CD4-positive, alpha-beta memory T cell (primary cell): ENCODE measurements at regions of chr5 and their contacts with region 1.

Region 1: GRCh38 chr5:141691867-141692532 is 10.0 kb upstream of the ARAP3 start:
- DNase-seq: peak; percentile 76 to 83 (median 76)
- H3K4me3 ChIP-seq: peak overlapping the region; percentile 31 to 76
- H3K4me3 Mint-ChIP-seq: peak overlapping the region; percentile 72 to 89 (median 82)
- H3K27ac ChIP-seq: no peak overlapping the region
- H3K27ac Mint-ChIP-seq: peak overlapping the region in 6 of 7 donors; percentile 36 to 85 (median 66)
- H3K4me1 ChIP-seq: peaks cover 22% of the 10 kb centered on the region
- H3K4me1 Mint-ChIP-seq: peaks cover 20 to 31% (median 24%) of the 10 kb centered on the region in 4 donors
- H3K27me3 ChIP-seq: no peaks in the 10 kb centered on the region
- H3K27me3 Mint-ChIP-seq: peaks cover 4% of the 10 kb centered on the region in 2 donors

Region 2: DNA sequence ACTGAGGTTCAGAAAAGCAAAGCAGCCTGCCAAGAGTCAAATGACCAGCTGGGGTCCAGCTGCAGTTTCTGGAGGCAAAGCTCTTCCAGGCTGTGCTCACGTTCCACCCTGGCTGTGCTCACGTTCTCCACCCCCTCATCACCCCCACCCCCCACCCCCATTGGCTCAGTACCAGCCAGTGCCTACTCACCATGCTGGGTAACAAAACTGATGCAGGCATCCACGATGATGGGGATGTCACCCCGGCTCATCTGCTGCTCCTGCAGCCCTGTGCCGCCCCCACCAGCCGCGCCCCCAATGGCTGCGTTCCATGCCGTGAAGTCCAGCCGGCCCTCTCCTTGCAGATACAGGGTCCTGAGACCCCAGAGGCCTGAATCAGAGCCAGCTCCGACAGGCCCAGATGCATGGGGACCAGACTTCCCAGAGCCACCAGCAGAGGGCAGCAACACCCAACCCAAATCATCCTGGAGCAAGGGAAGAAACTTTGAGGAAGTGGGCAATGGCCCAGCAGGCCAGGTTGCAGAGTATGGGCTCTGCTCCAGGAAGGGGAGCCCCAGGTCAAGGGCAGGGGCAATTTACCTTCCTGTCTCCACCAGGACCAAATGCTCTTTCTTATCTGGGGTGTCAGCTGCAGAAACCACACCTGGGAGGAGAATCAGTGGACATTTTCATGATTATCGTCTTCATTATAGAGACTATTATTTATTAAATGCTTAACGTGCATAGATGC is 27.1 kb before region 1 on chr5:
- CTCF ChIA-PET with region 1: interaction called, 53 read pairs
- POLR2A ChIA-PET with region 1: interaction called, 7 read pairs
- intact Hi-C with region 1: no loop called
- DNase-seq: peak; percentile 58 to 69 (median 59)
- H3K4me3 ChIP-seq: no peak overlapping the region
- H3K4me3 Mint-ChIP-seq: no peak overlapping the region
- H3K27ac ChIP-seq: no peak overlapping the region
- H3K27ac Mint-ChIP-seq: no peak overlapping the region
- H3K4me1 ChIP-seq: no peaks in the 10 kb centered on the region
- H3K4me1 Mint-ChIP-seq: peaks cover 2 to 5% (median 4%) of the 10 kb centered on the region in 4 donors
- H3K27me3 ChIP-seq: no peaks in the 10 kb centered on the region
- H3K27me3 Mint-ChIP-seq: no peaks in the 10 kb centered on the region

Region 3: GRCh38 chr5:141724825-141725573 is 33.0 kb after region 1 on chr5:
- CTCF ChIA-PET with region 1: no interaction called
- POLR2A ChIA-PET with region 1: no interaction called
- intact Hi-C with region 1: no loop called
- DNase-seq: no peak
- H3K4me3 ChIP-seq: no peak overlapping the region
- H3K4me3 Mint-ChIP-seq: no peak overlapping the region
- H3K27ac ChIP-seq: no peak overlapping the region
- H3K27ac Mint-ChIP-seq: no peak overlapping the region
- H3K4me1 ChIP-seq: no peaks in the 10 kb centered on the region
- H3K4me1 Mint-ChIP-seq: no peaks in the 10 kb centered on the region
- H3K27me3 ChIP-seq: no peaks in the 10 kb centered on the region
- H3K27me3 Mint-ChIP-seq: peaks cover 2 to 4% of the 10 kb centered on the region in 2 donors

Region 4: DNA sequence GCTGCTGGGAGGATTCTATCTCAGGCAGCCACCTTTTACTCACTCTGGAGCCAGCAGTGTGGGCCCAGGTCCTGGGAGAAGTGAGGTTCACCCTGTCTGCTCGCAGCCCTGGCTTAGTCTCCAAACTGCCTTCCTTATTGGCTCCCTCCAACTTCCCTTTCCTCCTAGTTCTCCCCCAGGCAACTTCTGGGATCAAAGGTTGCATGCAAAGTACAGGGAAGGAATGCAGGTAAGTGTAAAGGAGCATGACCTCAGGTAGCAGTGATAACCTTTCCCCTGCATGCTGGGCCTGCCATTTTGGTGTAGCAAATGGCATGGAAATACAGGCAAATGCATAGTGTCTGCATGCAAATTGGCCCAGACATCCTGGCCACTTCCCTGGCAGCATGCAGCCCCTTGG is 43.8 kb after region 1 on chr5:
- CTCF ChIA-PET with region 1: no interaction called
- POLR2A ChIA-PET with region 1: no interaction called
- intact Hi-C with region 1: no loop called
- DNase-seq: no peak
- H3K4me3 ChIP-seq: no peak overlapping the region
- H3K4me3 Mint-ChIP-seq: no peak overlapping the region
- H3K27ac ChIP-seq: no peak overlapping the region
- H3K27ac Mint-ChIP-seq: no peak overlapping the region
- H3K4me1 ChIP-seq: no peaks in the 10 kb centered on the region
- H3K4me1 Mint-ChIP-seq: no peaks in the 10 kb centered on the region
- H3K27me3 ChIP-seq: no peaks in the 10 kb centered on the region
- H3K27me3 Mint-ChIP-seq: peaks cover 19 to 36% of the 10 kb centered on the region in 2 donors

Region 5: DNA sequence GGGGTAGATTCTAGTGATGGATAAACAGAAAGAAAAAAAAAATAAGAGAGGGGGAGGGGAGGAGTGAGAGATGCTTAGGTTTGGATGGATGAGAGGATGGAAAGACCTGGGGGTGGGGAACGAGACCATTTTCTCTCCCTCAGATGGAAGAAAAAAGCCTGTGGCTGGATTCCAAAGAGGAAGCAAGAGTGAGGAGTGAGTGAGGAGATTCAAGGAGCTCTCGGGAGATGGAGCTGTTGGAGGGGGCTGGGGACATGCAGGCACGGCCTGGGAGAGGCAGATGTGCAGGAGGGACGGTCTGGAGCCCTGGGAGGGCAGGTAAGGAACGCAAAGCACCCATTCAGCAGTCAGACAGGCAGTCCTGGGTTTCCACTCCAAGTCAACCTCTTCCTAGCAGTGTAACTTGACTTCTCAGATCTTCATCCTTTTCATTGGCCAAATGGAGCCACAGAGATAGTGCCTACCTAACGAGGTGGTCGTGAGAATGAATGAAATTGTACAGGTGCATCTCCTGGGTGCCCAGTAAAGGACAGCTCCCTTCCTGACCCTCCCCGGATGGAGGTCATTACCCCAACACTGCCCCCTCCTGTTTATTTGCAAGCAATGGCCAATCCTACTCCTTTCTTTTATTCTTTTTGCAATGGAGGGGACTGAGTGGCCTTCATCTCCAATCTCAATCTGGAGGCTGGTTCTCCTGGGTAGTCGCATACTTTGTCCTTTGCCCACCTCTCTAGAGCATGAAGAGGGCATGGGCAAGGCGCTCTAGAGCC is 134.0 kb after region 1 on chr5:
- CTCF ChIA-PET with region 1: interaction called, 77 read pairs
- POLR2A ChIA-PET with region 1: interaction called, 13 read pairs
- intact Hi-C with region 1: loop called (anchors 2 kb)
- DNase-seq: peak in 2 of 5 donors; percentile 4 to 7
- H3K4me3 ChIP-seq: no peak overlapping the region
- H3K4me3 Mint-ChIP-seq: no peak overlapping the region
- H3K27ac ChIP-seq: no peak overlapping the region
- H3K27ac Mint-ChIP-seq: no peak overlapping the region
- H3K4me1 ChIP-seq: no peaks in the 10 kb centered on the region
- H3K4me1 Mint-ChIP-seq: peaks cover 0 to 3% (median 0%) of the 10 kb centered on the region in 4 donors
- H3K27me3 ChIP-seq: no peaks in the 10 kb centered on the region
- H3K27me3 Mint-ChIP-seq: peaks cover 4 to 10% of the 10 kb centered on the region in 2 donors

Region 6: DNA sequence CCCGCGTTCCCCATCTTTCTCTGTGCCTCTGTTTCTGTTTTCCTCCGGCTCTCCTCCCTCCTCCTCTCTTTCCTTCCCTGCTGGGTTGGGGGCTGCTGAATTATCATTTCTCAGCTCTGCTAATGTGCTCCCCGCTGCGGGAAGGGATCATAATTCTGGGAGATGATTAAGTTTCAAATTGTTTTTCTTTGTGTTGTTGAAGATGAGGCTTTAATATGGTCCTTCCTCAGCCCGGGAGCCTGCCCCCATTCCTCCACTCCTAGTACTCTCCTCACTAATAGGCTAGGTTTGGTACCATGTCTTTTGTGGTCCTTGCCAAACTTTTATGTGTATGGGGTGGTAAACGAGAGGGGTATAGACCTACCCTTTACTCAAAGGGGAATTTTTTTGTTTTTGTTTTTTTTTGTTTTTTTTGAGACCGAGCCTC is 191.9 kb after region 1 on chr5:
- CTCF ChIA-PET with region 1: interaction called, 239 read pairs
- POLR2A ChIA-PET with region 1: interaction called, 63 read pairs
- intact Hi-C with region 1: loop called (anchors 1 kb)
- DNase-seq: no peak
- H3K4me3 ChIP-seq: no peak overlapping the region
- H3K4me3 Mint-ChIP-seq: no peak overlapping the region
- H3K27ac ChIP-seq: no peak overlapping the region
- H3K27ac Mint-ChIP-seq: no peak overlapping the region
- H3K4me1 ChIP-seq: peaks cover 9% of the 10 kb centered on the region
- H3K4me1 Mint-ChIP-seq: peaks cover 7 to 23% (median 12%) of the 10 kb centered on the region in 4 donors
- H3K27me3 ChIP-seq: peaks cover 29% of the 10 kb centered on the region
- H3K27me3 Mint-ChIP-seq: peaks cover 48 to 56% of the 10 kb centered on the region in 2 donors

Region 7: GRCh38 chr5:141923448-141924352 is 231.7 kb after region 1 on chr5 and contains the start of gene DELE1:
- CTCF ChIA-PET with region 1: interaction called, 35 read pairs
- POLR2A ChIA-PET with region 1: interaction called, 24 read pairs
- intact Hi-C with region 1: loop called (anchors 2 kb)
- DNase-seq: peak; percentile 89 to 92 (median 92)
- H3K4me3 ChIP-seq: peak within 1 kb of the TSS; percentile 76 to 93
- H3K4me3 Mint-ChIP-seq: peak within 1 kb of the TSS; percentile 87 to 97 (median 92)
- H3K27ac ChIP-seq: peak within 1 kb of the TSS; percentile 99
- H3K27ac Mint-ChIP-seq: peak within 1 kb of the TSS; percentile 95 to 98 (median 97)
- H3K4me1 ChIP-seq: peaks cover 31% of the 10 kb centered on the region
- H3K4me1 Mint-ChIP-seq: peaks cover 14 to 48% (median 34%) of the 10 kb centered on the region in 4 donors
- H3K27me3 ChIP-seq: no peaks in the 10 kb centered on the region
- H3K27me3 Mint-ChIP-seq: no peaks in the 10 kb centered on the region
- total RNA-seq, gene DELE1: 73.2 to 83.1 TPM

Region 8: GRCh38 chr5:141992349-141992963 is 300.5 kb after region 1 on chr5:
- CTCF ChIA-PET with region 1: interaction called, 22 read pairs
- POLR2A ChIA-PET with region 1: no interaction called
- intact Hi-C with region 1: no loop called
- DNase-seq: peak; percentile 67 to 74 (median 70)
- H3K4me3 ChIP-seq: no peak overlapping the region
- H3K4me3 Mint-ChIP-seq: no peak overlapping the region
- H3K27ac ChIP-seq: no peak overlapping the region
- H3K27ac Mint-ChIP-seq: peak overlapping the region in 3 of 7 donors; percentile 9 to 71 (median 60)
- H3K4me1 ChIP-seq: no peaks in the 10 kb centered on the region
- H3K4me1 Mint-ChIP-seq: peaks cover 3 to 7% (median 4%) of the 10 kb centered on the region in 4 donors
- H3K27me3 ChIP-seq: no peaks in the 10 kb centered on the region
- H3K27me3 Mint-ChIP-seq: no peaks in the 10 kb centered on the region

Region 9: DNA sequence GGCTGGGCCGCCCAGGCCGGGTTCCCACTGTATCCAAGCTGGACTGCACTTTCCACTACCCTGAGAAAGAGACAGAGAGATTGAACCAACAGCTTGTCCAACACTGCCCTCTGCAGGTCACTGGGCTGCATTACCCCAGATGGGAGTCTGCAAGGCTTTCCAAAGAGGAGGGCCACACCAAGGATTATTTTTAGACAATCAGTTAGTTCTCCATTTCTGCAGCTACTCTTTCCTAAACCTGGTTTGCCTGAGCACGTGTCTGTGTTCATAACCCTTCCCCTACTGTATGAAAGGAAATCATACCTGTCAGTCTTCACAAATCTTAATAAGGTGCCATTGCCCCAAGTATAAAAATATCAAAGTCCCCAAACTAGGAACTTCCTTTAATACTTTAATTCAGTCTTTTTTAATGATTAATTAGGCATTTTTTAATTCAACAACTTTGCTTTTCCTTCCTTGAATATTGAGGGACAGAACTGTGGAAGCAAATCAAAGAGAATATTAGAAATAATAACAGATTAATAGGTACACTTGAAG is 1007.3 kb after region 1 on chr5:
- CTCF ChIA-PET with region 1: no interaction called
- POLR2A ChIA-PET with region 1: no interaction called
- intact Hi-C with region 1: loop called (anchors 1 kb)
- DNase-seq: peak; percentile 68 to 73 (median 72)
- H3K4me3 ChIP-seq: no peak overlapping the region
- H3K4me3 Mint-ChIP-seq: no peak overlapping the region
- H3K27ac ChIP-seq: no peak overlapping the region
- H3K27ac Mint-ChIP-seq: no peak overlapping the region
- H3K4me1 ChIP-seq: no peaks in the 10 kb centered on the region
- H3K4me1 Mint-ChIP-seq: peaks cover 0 to 2% (median under 1%) of the 10 kb centered on the region in 4 donors
- H3K27me3 ChIP-seq: no peaks in the 10 kb centered on the region
- H3K27me3 Mint-ChIP-seq: peaks cover 2% of the 10 kb centered on the region in 2 donors